ENCODE measurements at regions of chr19 and their contacts with region 1.

Region 1: DNA sequence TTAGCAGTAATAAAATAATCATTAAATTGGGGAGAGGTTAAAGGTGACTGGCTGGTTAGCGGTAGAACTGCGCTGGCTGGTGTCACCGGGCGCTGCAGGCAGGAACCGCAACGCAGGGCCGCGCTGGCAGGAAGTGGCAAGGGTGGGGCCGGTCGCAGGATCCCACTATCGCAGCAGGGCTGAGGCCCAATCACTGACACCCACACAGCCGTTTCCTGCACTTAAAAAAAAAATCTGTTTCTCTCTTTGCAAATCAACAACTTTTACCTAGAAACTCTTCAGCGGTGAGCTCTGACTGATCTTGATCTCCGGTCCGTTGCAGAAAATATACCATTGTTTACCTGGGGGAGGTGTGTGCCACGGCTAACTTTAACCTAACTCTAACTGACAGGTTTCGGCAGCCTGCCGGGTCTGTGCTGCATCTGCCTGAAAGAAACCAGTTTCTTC is 46.9 kb downstream of the KLF2 start:
- DNase-seq: peak; percentile 96
- ATAC-seq: peak; percentile 70
- H3K4me3 Mint-ChIP-seq: no peak overlapping the region
- H3K27ac Mint-ChIP-seq: no peak overlapping the region
- H3K4me1 Mint-ChIP-seq: peaks cover 40% of the 10 kb centered on the region
- H3K27me3 Mint-ChIP-seq: peaks cover 3% of the 10 kb centered on the region

Region 2: DNA sequence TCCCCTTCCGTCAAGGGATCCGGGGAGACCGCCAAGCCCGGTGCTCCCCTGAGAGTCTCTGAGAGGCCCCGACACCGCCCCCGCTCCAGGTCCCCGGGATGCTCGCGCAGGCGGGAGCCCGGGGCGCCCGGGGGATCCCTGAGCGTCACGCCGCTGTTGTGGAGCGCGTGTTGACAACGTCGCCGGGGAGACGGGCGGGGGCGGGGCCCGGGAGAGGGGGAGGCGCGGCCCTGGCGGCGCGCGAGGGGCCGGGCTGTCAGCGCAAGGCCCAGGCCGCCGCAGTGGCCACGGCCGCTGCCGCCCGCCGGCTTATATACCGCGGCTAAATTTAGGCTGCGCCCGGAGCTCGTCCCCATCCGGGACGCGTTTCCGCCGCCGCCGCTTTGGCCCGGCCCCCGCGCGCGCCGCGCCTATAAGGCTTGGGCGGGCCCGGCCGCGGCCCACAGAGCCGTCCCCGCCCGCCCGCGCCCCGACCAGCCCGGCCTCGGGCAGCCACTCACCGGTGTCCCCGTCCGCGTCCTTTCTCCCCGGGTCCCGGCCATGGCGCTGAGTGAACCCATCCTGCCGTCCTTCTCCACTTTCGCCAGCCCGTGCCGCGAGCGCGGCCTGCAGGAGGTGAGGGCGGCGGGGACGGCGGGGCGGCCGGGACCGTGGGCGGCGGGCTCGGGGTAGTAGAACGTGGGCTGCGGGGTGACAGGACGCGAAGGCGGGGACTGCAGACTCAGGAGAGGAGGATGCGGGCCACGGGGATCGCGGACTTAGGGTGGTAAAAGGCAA is 47.0 kb before region 1 on chr19 and contains the start of gene KLF2:
- CTCF ChIA-PET with region 1: interaction called, 29 read pairs
- POLR2A ChIA-PET with region 1: interaction called, 556 read pairs
- DNase-seq: peak; percentile 93
- ATAC-seq: peak; percentile 72
- H3K4me3 Mint-ChIP-seq: peak within 1 kb of the TSS; percentile 66
- H3K27ac Mint-ChIP-seq: no peak within 1 kb of the TSS
- H3K4me1 Mint-ChIP-seq: peaks cover 49% of the 10 kb centered on the region
- H3K27me3 Mint-ChIP-seq: peaks cover 34% of the 10 kb centered on the region
- total RNA-seq, gene KLF2: 96.0 to 100 TPM

Region 3: GRCh38 chr19:16330368-16330801 is 41.2 kb before region 1 on chr19:
- CTCF ChIA-PET with region 1: interaction called, 29 read pairs
- POLR2A ChIA-PET with region 1: interaction called, 556 read pairs
- DNase-seq: peak; percentile 94
- ATAC-seq: peak; percentile 69
- H3K4me3 Mint-ChIP-seq: peak overlapping the region; percentile 91
- H3K27ac Mint-ChIP-seq: peak overlapping the region; percentile 82
- H3K4me1 Mint-ChIP-seq: peaks cover 64% of the 10 kb centered on the region
- H3K27me3 Mint-ChIP-seq: peaks cover 25% of the 10 kb centered on the region

Region 4: DNA sequence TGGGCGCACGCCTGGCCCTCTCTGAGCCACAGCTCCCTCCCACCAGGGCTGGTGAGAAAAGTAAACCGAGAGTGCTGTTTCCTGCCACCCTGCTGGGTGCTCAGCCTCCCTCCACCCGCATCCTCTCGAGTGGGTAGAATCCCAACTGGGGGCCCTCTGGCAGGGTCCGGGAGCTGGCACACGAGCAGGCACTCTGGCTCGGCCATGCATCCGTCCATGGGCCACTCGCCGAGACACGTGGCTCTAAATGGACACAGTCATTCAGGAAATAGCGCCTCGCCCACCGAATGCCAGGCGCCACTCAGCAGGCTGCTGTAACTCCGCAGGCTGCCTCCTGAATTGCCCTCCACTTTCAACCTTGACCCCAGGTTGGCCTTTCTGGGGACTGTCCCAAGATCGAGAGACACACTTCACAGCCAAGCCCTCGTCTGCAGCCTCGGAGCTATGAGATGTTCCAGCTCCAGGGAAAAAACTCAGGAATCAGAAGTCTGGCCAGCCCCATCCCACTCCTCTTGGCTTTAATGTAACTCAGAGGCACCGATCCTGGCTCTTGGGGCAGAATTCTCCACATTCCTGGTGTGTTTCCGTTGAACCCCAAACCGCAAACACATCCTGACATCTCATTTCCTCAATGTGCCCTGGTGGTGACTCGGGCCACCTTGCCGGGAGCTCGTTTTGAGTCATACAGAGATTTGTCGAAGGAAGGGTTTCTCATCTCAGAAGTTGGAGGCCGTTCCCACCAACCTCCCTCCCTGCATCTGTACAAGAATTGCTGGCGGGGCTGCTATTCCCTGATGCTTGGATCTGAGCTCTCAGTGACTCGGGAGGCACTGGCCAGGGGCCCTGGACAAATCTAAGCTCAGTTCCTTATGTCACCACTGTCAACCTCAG is 32.8 kb before region 1 on chr19:
- CTCF ChIA-PET with region 1: interaction called, 21 read pairs
- POLR2A ChIA-PET with region 1: interaction called, 556 read pairs
- DNase-seq: peak; percentile 76
- ATAC-seq: peak; percentile 70
- H3K4me3 Mint-ChIP-seq: peak overlapping the region; percentile 65
- H3K27ac Mint-ChIP-seq: peak overlapping the region; percentile 90
- H3K4me1 Mint-ChIP-seq: peaks cover 69% of the 10 kb centered on the region
- H3K27me3 Mint-ChIP-seq: peaks cover 14% of the 10 kb centered on the region

Region 5: GRCh38 chr19:16495982-16496612 is 124.5 kb after region 1 on chr19 and contains the starts of genes C19orf44 and CALR3:
- CTCF ChIA-PET with region 1: no interaction called
- POLR2A ChIA-PET with region 1: no interaction called
- DNase-seq: peak; percentile 99
- ATAC-seq: peak; percentile 99
- H3K4me3 Mint-ChIP-seq: peak within 1 kb of the TSS; percentile 96
- H3K27ac Mint-ChIP-seq: peak within 1 kb of the TSS; percentile 89
- H3K4me1 Mint-ChIP-seq: peaks cover 9% of the 10 kb centered on the region
- H3K27me3 Mint-ChIP-seq: no peaks in the 10 kb centered on the region
- total RNA-seq, gene C19orf44: 3.0 to 3.1 TPM
- total RNA-seq, gene CALR3: not detected

Measured in activated CD8-positive, alpha-beta T cell treated with anti-CD3 and anti-CD28 coated beads, Interleukin-2, amount 10 ng/mL, durations not matched to agents 7 days and 5 days (primary cell).